Naive thymus-derived CD4-positive, alpha-beta T cell (primary cell): ENCODE measurements at regions of chr10 and their contacts with region 1.

Region 1: GRCh38 chr10:19133992-19134391 is 85.4 kb downstream of the MALRD1 start:
- DNase-seq: no peak
- ATAC-seq: no peak
- H3K4me3 ChIP-seq: no peak overlapping the region
- H3K4me3 Mint-ChIP-seq: no peak overlapping the region
- H3K27ac ChIP-seq: no peak overlapping the region
- H3K27ac Mint-ChIP-seq: no peak overlapping the region
- H3K4me1 ChIP-seq: no peaks in the 10 kb centered on the region
- H3K4me1 Mint-ChIP-seq: no peaks in the 10 kb centered on the region
- H3K27me3 ChIP-seq: no peaks in the 10 kb centered on the region
- H3K27me3 Mint-ChIP-seq: no peaks in the 10 kb centered on the region

Region 2: GRCh38 chr10:19168584-19168983 is 34.6 kb after region 1 on chr10:
- CTCF ChIA-PET with region 1: no interaction called
- POLR2A ChIA-PET with region 1: no interaction called
- intact Hi-C with region 1: loop called in 1 of 2 experiments (anchors 1 kb)
- DNase-seq: no peak
- ATAC-seq: no peak
- H3K4me3 ChIP-seq: no peak overlapping the region
- H3K4me3 Mint-ChIP-seq: no peak overlapping the region
- H3K27ac ChIP-seq: no peak overlapping the region
- H3K27ac Mint-ChIP-seq: no peak overlapping the region
- H3K4me1 ChIP-seq: no peaks in the 10 kb centered on the region
- H3K4me1 Mint-ChIP-seq: no peaks in the 10 kb centered on the region
- H3K27me3 ChIP-seq: no peaks in the 10 kb centered on the region
- H3K27me3 Mint-ChIP-seq: no peaks in the 10 kb centered on the region